Head of caudate nucleus (tissue), 42 donors: ENCODE measurements at regions of chr14 and their contacts with region 1.

Region 1: DNA sequence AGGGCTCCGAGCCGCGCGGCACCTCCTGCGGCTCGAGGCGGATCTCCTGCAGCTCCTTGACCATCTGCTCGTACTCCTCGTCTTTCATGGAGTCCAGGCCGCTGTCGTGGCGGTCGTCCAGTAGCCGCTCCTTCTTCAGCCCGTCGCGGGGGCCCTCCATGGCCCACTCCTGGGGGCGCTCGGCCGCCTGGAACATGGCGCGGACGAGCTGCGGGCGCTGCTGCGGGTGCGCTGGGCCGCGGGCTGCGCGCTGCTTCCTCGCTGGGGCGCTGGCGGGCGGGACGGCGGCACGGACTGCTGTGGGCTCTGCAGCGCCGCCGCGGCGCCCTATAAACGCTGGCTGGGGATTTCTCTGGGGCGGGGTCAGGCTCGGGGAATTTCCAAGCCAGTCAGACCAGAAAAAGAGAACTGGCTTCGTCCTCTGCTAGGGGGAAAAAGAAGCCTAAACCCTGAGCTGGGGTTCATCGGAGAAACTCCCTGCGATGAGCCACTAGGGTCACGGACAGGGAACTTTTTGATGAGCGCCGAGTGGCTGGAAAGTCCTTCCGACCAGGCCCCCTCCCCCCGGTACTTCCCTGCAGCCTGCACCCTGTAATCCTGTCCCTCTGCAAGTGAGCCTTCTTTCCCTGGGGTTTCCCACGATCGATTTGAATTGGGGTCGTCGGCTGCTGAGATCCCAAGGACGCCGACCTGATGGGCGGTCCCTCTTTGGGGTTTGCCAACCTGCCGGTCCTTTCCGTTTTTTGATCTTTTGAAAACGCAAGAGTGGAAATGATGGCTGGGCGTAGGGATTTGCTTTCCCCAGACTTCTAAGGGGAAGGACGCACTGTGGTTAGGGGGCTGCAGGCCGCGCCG is at the start of gene NFKBIA:
- DNase-seq: peak; percentile 81 to 97 (median 93)

Region 2: DNA sequence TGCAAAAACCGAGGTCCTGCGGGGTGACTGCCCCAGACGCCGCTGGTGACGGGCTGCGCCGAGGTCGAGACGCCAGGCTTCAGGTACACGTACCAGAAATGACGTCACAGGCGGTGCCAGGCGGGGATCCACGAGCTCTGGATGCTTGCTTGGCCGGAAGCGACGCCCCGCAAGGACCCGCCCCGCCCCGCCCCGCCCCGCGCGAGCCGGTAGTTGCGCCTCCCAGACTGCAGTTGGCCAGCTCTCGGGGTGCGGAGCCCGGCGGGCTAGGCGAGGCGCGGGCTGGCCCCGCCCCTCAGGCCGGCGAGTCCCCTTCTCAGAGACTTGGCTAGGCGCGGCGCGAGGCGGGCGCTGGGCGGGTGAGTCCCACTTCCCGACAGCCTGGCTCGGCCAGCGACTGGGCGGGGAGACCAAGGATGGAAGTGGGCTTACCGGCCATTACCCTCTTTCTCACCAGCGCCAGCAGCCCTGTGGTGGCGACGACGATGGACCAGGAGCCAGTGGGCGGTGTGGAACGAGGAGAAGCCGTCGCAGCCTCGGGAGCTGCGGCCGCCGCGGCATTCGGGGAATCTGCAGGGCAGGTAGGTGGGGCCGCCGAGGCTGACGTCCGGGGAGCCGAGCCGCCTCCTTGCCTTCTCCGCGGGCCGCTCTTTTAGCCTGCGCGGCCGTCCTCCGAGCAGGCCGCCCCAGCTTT is 358.5 kb before region 1 on chr14 and contains the start of gene FAM177A1:
- intact Hi-C with region 1: loop called (anchors 5 kb)
- DNase-seq: peak; percentile 96 to 99 (median 98)

Region 3: GRCh38 chr14:35134328-35135123 is 270.1 kb before region 1 on chr14:
- intact Hi-C with region 1: loop called (anchors 5 kb)
- DNase-seq: peak in 1 of 42 donors; percentile 10

Region 4: GRCh38 chr14:35197015-35197414 is 207.7 kb before region 1 on chr14:
- intact Hi-C with region 1: no loop called
- DNase-seq: no peak

Region 5: GRCh38 chr14:35292051-35292769 is 112.5 kb before region 1 on chr14 and contains the start of gene PSMA6:
- intact Hi-C with region 1: loop called (anchors 2 kb)
- DNase-seq: peak; percentile 98 to 100 (median 100)

Region 6: DNA sequence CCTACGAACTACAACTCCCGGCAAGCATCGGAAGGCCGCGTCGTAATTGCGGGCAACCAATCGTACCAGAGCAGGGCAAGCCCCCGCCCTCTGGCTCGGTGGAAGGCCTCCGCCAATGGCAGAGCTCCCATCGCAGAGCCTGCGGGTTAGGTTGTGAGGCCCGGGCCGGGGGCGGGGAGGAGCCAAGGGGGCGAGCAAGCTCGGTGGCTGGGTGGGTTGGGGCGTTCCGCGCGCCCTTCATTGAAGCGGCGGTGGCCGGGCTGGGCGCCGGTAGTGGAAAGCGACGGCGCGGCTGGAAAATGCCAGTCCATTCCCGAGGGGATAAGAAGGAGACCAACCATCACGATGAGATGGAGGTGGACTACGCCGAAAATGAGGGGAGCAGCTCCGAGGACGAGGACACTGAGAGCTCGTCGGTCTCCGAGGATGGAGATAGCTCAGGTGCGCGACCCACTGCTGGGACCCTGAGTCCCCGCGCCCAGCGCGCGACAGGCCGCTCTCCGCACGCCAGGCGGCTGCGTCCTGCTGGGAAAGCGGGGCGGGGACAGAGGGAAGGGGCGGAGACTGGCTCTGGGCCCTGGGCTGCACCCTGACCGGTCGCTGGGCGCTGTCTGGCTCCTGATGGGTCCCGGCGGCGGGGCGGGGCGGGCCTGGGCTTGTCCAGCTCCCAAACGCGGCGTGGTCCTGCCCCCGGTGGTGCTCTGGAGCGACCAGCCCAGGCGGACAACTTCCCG is 421.7 kb after region 1 on chr14 and contains the start of gene BRMS1L:
- intact Hi-C with region 1: loop called (anchors 10 kb)
- DNase-seq: peak; percentile 91 to 100 (median 99)